Heart right ventricle (tissue), 16 donors: ENCODE measurements at regions of chr1 and their contacts with region 1.

Region 1: DNA sequence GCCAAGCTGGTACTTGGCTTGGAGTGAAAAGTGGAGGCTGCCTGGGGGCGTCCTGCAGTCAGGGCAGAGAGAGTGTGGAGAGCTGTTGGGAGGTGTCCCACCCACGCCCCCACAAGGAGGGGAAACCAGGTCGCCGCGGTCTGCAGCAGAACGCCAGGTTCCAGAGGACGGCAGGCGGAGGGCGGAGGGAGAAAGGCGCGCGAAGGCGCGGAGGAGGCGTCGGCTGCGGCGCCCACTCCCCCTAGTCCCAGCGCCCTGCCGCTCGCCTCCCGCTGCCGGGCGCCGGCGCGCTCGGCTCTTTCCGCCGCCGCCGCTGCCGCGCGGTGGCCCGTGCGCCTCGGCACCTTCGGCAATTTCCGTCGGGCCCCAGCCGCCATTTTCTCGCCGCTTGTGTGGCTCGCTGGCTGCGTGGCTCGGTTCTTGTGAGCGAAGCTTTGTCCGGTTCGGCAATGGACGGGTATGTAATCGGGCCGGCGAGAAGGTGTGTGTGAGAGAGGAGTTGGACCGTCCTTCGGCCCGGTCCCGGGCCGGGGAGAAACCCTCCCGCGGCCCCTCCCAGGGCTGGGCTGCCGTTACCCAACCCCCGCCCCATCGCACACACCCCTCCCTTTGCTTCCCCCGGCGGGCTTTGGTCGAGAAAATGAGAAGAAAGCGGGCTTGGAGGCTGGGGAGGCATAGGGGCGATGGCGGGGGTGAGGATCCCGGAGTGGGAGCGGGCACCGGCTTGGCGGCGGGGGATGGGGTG is at the start of gene PTBP2:
- DNase-seq: peak; percentile 84
- ATAC-seq: peak; percentile 93 to 98 (median 96)
- H3K4me3 ChIP-seq: peak within 1 kb of the TSS; percentile 71 to 95 (median 92)
- H3K27ac ChIP-seq: peak within 1 kb of the TSS; percentile 89 to 98 (median 94)
- H3K4me1 ChIP-seq: peaks cover 0 to 28% (median 22%) of the 10 kb centered on the region in 9 donors
- H3K27me3 ChIP-seq: no peaks in the 10 kb centered on the region
- CTCF ChIP-seq: no peak
- total RNA-seq, gene PTBP2: 10.7 to 15.0 (median 12.5) TPM

Region 2: GRCh38 chr1:96538111-96538641 is 183.4 kb before region 1 on chr1:
- intact Hi-C with region 1: loop called in 2 of 10 experiments (anchors 10 kb)
- DNase-seq: peak in 1 of 2 donors; percentile 28
- ATAC-seq: peak; percentile 87 to 98 (median 94)
- H3K4me3 ChIP-seq: peak overlapping the region in 1 of 10 donors; percentile 9
- H3K27ac ChIP-seq: peak overlapping the region; percentile 49 to 86 (median 64)
- H3K4me1 ChIP-seq: peaks cover 0 to 28% (median 16%) of the 10 kb centered on the region in 9 donors
- H3K27me3 ChIP-seq: no peaks in the 10 kb centered on the region
- CTCF ChIP-seq: peak in 6 of 9 donors; percentile 21 to 58 (median 42)

Region 3: GRCh38 chr1:96808191-96808590 is 86.6 kb after region 1 on chr1:
- intact Hi-C with region 1: loop called in 3 of 10 experiments (anchors 10 kb)
- DNase-seq: no peak
- ATAC-seq: no peak
- H3K4me3 ChIP-seq: no peak overlapping the region
- H3K27ac ChIP-seq: no peak overlapping the region
- H3K4me1 ChIP-seq: peaks cover 0 to 25% (median 10%) of the 10 kb centered on the region in 9 donors
- H3K27me3 ChIP-seq: no peaks in the 10 kb centered on the region
- CTCF ChIP-seq: no peak

Region 4: DNA sequence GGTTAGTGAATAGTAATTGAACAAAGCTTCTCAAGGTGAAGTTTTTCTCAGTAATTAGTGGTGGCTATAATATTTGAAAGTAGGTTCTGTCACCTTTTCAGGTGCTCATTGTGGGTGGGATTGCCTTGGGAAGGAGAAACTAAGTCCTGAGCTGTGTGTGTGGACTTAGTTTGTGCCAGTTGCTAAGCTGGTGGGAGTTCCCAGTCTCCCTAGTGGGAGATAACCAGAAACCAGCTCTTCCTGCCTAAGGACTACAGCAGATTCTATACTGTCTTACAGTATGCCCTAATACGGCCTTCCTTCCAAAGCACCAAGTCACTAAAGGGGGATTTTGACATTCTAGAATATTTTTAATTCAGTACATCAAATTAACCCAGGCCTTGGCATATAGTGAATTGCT is 94.3 kb after region 1 on chr1:
- intact Hi-C with region 1: loop called in 1 of 10 experiments (anchors 10 kb)
- DNase-seq: no peak
- ATAC-seq: no peak
- H3K4me3 ChIP-seq: no peak overlapping the region
- H3K27ac ChIP-seq: no peak overlapping the region
- H3K4me1 ChIP-seq: peaks cover 0 to 4% (median 0%) of the 10 kb centered on the region in 9 donors
- H3K27me3 ChIP-seq: no peaks in the 10 kb centered on the region
- CTCF ChIP-seq: no peak

Region 5: GRCh38 chr1:97820470-97821188 is 1099.0 kb after region 1 on chr1:
- intact Hi-C with region 1: loop called in 1 of 10 experiments (anchors 10 kb)
- DNase-seq: no peak
- ATAC-seq: peak in 3 of 8 donors; percentile 48 to 55 (median 52)
- H3K4me3 ChIP-seq: no peak overlapping the region
- H3K27ac ChIP-seq: no peak overlapping the region
- H3K4me1 ChIP-seq: peaks cover 0 to 10% (median 5%) of the 10 kb centered on the region in 9 donors
- H3K27me3 ChIP-seq: no peaks in the 10 kb centered on the region
- CTCF ChIP-seq: peak; percentile 21 to 74 (median 59)